Ascending aorta (tissue), 2 donors: ENCODE measurements at regions of chr15 and their contacts with region 1.

Region 1: DNA sequence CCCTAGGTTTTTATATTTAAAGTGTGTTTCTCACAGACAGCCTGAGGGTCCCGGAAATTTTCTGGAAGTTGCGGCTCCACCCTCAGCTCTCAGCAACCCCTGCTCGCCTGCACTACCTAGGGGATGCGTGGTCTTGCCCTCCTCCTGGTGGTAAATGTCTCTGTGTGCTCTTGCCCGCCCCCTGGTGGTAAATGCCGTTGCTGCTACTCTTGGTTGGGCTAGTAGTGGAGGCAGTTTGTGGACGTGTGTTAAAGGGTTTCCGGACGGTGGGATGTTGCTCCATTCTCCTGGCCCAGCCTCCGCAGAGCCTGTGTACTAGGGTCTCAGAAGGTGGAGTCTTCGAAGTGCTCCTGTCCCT is 27.4 kb downstream of the STOML1 start:
- DNase-seq: peak; percentile 59 to 94
- H3K4me3 ChIP-seq: peak overlapping the region in 1 of 2 donors; percentile 14
- H3K27ac ChIP-seq: no peak overlapping the region
- H3K4me1 ChIP-seq: peaks cover 0 to 3% of the 10 kb centered on the region in 2 donors
- H3K27me3 ChIP-seq: no peaks in the 10 kb centered on the region
- CTCF ChIP-seq: peak; percentile 97 to 98 (median 98)

Region 2: DNA sequence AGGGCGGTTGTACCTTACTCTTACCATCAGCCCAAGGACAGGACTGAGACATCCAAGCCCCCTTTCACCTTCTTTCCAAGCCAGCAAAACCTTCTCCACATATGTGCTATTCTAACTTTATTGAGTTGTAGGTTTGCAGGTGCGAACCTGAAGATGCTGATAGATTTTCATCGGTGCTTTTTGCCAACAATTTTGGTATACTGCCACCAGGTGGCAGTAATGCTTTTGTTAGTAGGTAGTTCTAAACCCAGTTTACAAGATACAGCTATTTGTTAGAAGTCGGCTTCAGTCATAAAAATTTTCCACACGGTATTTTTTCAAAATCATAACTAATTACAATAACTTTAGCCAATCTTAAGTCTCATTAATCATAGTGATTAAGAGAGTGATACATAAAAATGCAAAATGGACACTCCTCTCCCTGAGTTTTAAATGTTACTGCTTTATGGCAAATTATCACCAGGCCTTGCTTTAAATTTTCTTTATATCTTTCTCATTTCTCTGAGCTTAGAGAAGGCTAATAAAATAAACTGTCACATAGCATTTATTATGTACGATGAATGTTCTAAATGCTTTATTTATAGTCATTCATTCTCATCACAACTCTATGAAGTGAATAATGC is 90.7 kb before region 1 on chr15:
- intact Hi-C with region 1: loop called (anchors 2 kb)
- DNase-seq: no peak
- H3K4me3 ChIP-seq: no peak overlapping the region
- H3K27ac ChIP-seq: no peak overlapping the region
- H3K4me1 ChIP-seq: no peaks in the 10 kb centered on the region
- H3K27me3 ChIP-seq: no peaks in the 10 kb centered on the region
- CTCF ChIP-seq: peak; percentile 53 to 77 (median 56)

Region 3: DNA sequence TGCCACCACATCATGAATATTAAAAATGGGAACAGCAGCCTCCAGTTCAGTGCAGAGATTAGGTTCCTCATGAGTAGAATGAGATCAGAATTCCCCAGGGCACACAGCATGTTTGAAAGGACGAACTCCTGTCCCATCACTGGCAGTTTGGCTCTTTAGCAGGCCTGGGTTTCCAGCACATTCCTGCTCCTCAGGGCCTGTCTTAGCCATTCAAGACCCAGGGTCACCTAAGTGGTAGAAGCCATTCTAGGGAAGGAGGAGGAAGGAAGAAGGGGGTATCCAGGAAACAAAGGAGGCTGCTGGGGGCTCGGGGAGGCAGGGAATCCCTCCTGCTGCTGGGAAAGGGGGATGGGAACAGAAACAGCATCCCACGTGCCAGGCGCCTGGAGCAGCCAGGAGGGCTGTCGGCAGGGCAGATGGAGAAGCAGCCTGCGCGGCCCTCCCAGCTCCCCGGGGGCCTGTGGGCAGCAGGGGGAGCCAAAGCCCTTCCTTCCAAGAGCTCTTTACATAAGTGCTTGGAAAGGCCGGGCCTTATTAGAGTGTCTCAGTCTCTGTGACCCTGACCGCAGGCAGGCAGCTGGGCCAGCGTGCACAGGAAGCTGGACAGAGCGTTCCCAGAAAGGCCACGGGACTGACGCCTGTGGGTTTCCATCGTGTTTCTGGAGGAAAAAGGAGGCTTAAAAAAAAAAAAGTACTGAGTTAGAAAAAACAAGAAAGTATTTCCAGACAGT is 13.7 kb before region 1 on chr15:
- intact Hi-C with region 1: loop called (anchors 1 kb)
- DNase-seq: peak; percentile 94 to 99
- H3K4me3 ChIP-seq: peak overlapping the region in 1 of 2 donors; percentile 30
- H3K27ac ChIP-seq: peak overlapping the region; percentile 99 to 100
- H3K4me1 ChIP-seq: peaks cover 9 to 35% of the 10 kb centered on the region in 2 donors
- H3K27me3 ChIP-seq: no peaks in the 10 kb centered on the region
- CTCF ChIP-seq: peak; percentile 80 to 95 (median 81)